Activated CD4-positive, alpha-beta T cell treated with anti-CD3 and anti-CD28 coated beads for 36 hours (primary cell): ENCODE measurements at regions of chr12 and their contacts with region 1.

Region 1: DNA sequence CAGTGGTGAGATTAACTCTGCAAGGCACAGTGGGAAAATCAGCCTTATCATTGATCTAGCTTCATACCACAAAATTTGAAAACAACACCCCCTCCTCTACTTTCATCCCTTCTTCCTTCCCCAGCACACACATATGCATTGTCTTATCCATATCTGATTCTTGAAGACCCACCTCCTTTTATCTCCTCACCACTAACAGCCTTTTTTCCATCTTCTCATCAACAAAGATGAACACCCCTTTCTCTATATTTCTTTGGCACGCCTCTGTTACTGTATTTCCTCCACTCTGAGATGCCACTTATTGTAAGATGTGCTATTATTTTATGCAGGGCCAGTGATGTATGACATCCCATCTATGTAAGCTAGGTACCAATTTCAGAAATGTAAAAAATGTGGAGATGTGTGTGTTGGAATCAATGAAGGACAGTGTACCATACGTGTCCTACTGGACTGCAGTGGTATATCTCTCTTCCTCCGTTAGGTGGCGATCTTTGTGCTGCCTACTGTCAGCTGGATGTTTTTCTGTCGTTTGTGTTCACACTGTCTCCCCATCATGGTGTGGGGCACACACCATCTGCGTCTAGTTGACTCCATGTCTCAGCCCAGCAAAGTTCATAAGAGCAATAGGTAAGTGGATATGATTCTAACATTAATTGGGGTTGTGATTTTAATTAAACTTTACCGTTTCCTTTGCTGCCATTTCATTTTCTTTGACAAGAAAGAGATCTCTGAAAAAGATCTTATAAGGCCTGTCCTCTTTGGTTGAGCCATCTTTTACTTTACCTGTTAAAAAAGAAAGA is 24.0 kb downstream of the CCDC38 start:
- DNase-seq: peak; percentile 60
- ATAC-seq: peak; percentile 97
- H3K4me3 Mint-ChIP-seq: no peak overlapping the region
- H3K27ac Mint-ChIP-seq: no peak overlapping the region
- H3K4me1 Mint-ChIP-seq: no peaks in the 10 kb centered on the region
- H3K27me3 Mint-ChIP-seq: no peaks in the 10 kb centered on the region

Region 2: GRCh38 chr12:95959107-95959506 is 40.7 kb after region 1 on chr12:
- CTCF ChIA-PET with region 1: interaction called, 18 read pairs
- POLR2A ChIA-PET with region 1: no interaction called
- intact Hi-C with region 1: no loop called
- DNase-seq: no peak
- ATAC-seq: no peak
- H3K4me3 Mint-ChIP-seq: no peak overlapping the region
- H3K27ac Mint-ChIP-seq: no peak overlapping the region
- H3K4me1 Mint-ChIP-seq: no peaks in the 10 kb centered on the region
- H3K27me3 Mint-ChIP-seq: no peaks in the 10 kb centered on the region

Region 3: DNA sequence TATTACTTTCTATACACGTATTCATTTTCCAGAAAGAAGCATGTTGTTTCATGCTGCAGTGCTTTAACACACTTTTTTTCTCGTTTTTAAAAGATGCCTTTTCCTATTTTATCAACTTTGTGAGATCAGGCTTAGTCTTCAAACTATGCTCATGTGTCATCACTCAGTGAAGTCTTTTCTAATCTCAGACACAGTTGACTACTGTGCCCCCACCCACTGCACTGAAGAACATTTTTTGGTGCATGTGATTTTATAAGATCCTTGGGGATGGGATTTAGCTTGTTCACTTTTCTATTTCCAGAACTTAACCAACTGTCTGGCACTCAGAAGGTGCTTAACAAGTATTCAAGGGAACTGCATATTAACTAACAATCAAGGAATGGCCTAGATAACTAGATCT is 396.3 kb after region 1 on chr12:
- CTCF ChIA-PET with region 1: no interaction called
- POLR2A ChIA-PET with region 1: no interaction called
- intact Hi-C with region 1: no loop called
- DNase-seq: no peak
- ATAC-seq: peak; percentile 44
- H3K4me3 Mint-ChIP-seq: no peak overlapping the region
- H3K27ac Mint-ChIP-seq: no peak overlapping the region
- H3K4me1 Mint-ChIP-seq: peaks cover 24% of the 10 kb centered on the region
- H3K27me3 Mint-ChIP-seq: no peaks in the 10 kb centered on the region